ENCODE measurements at regions of chr6 and their contacts with region 1.

Region 1: GRCh38 chr6:158072083-158072721 is 90.5 kb downstream of the SYNJ2 start:
- DNase-seq: peak; percentile 61
- ATAC-seq: peak; percentile 8; the same call in 1 of the 2 replicates
- H3K4me3 ChIP-seq: no peak overlapping the region
- H3K27ac ChIP-seq: peak overlapping the region; percentile 32; the same call in 1 of the 2 replicates
- H3K4me1 ChIP-seq: peaks cover 40% of the 10 kb centered on the region
- H3K27me3 ChIP-seq: no peaks in the 10 kb centered on the region
- CTCF ChIP-seq: peak; percentile 83

Region 2: GRCh38 chr6:157981395-157982296 is 90.6 kb before region 1 on chr6 and contains the start of gene SYNJ2:
- CTCF ChIA-PET with region 1: interaction called, 3 read pairs
- POLR2A ChIA-PET with region 1: no interaction called
- intact Hi-C with region 1: loop called (anchors 1 kb)
- DNase-seq: peak; percentile 72
- ATAC-seq: peak; percentile 72
- H3K4me3 ChIP-seq: peak within 1 kb of the TSS; percentile 94
- H3K27ac ChIP-seq: peak within 1 kb of the TSS; percentile 19
- H3K4me1 ChIP-seq: peaks cover 33% of the 10 kb centered on the region
- H3K27me3 ChIP-seq: no peaks in the 10 kb centered on the region
- CTCF ChIP-seq: peak; percentile 51
- total RNA-seq, gene SYNJ2: 21.5 and 24.9 TPM in 2 replicates

Region 3: DNA sequence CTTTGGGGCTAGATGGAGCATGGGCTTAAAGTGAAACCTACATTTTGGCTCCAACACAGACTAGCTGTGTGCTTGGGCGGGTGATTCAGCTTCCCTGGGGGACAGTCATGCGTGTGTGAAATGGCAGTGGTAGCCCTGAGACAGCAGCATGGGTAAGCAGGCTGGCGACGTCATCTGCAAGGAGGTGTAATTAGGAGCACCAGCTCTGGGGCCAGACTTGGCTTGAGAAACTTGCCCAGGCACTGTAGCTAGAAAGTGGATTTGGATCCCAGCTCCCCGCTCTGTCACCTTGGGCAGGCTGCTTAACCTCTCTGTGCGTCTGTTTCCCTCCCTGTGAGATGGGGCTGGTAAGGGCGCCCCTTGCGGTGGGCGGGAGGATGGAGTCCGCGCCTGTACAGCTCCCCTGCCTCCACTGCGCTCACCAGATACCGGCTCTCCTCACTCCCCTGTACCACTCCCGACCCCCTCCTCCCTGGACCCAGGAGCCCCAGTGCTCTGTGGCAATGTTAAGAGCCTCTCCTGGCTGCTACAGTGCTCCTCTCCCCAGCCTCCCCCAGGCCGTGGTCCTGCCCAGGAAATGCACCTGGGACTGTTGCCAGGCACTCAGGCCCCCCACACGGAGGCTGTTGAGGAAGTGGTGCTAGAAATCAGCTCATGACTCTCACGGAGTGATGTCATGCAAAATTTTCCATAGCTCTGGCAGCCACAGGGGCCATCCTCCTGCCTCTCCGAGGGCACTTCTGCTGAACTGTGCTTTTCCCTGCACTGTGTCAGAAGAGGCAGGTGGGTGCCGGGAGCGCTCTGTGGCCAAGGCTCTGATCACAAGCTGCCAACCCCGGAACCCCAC is 45.9 kb before region 1 on chr6:
- CTCF ChIA-PET with region 1: no interaction called
- POLR2A ChIA-PET with region 1: no interaction called
- intact Hi-C with region 1: loop called (anchors 5 kb)
- DNase-seq: peak; percentile 74
- ATAC-seq: peak; percentile 81
- H3K4me3 ChIP-seq: no peak overlapping the region
- H3K27ac ChIP-seq: peak overlapping the region; percentile 97
- H3K4me1 ChIP-seq: peaks cover 29% of the 10 kb centered on the region
- H3K27me3 ChIP-seq: no peaks in the 10 kb centered on the region
- CTCF ChIP-seq: no peak

Region 4: GRCh38 chr6:158057213-158057987 is 14.8 kb before region 1 on chr6:
- CTCF ChIA-PET with region 1: interaction called, 4 read pairs
- POLR2A ChIA-PET with region 1: interaction called, 3 read pairs
- intact Hi-C with region 1: loop called (anchors 1 kb)
- DNase-seq: peak; percentile 93
- ATAC-seq: peak; percentile 80
- H3K4me3 ChIP-seq: peak overlapping the region; percentile 36; the same call in 1 of the 2 replicates
- H3K27ac ChIP-seq: peak overlapping the region; percentile 96
- H3K4me1 ChIP-seq: peaks cover 50% of the 10 kb centered on the region
- H3K27me3 ChIP-seq: no peaks in the 10 kb centered on the region
- CTCF ChIP-seq: no peak

Region 5: GRCh38 chr6:158103228-158103627 is 31.0 kb after region 1 on chr6:
- CTCF ChIA-PET with region 1: no interaction called
- POLR2A ChIA-PET with region 1: no interaction called
- intact Hi-C with region 1: no loop called
- DNase-seq: no peak
- ATAC-seq: no peak
- H3K4me3 ChIP-seq: no peak overlapping the region
- H3K27ac ChIP-seq: no peak overlapping the region
- H3K4me1 ChIP-seq: no peaks in the 10 kb centered on the region
- H3K27me3 ChIP-seq: no peaks in the 10 kb centered on the region
- CTCF ChIP-seq: no peak

Region 6: DNA sequence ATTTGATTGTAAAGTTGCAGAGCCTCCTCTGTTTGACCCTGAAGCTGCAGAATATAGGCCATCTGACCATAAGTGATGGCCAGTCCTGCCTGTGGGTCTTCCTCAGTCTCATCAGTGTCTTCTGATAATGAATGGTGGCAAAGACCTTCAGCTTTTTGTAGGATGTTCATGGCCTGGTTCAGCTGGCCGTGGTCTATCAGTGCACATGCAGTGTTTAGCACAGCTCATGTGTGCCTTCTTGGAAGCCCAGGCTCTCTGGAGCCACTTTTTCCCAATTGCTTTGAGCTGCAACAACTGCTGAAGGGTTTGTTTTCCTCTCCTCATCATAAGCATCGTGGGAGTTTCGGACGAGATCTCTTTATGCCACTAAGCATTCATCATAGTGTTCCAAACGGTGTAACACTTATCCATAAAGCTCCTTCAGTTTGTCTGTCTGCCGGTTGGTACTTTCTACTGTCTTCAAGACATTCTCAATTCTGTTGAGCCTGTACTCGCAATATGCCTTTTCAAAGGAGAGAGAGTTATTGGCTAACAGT is 169.9 kb after region 1 on chr6:
- CTCF ChIA-PET with region 1: no interaction called
- POLR2A ChIA-PET with region 1: no interaction called
- intact Hi-C with region 1: no loop called
- DNase-seq: no peak
- ATAC-seq: peak; percentile 12; the same call in 1 of the 2 replicates
- H3K4me3 ChIP-seq: no peak overlapping the region; the same call in 1 of the 2 replicates
- H3K27ac ChIP-seq: peak overlapping the region; percentile 9; the same call in 1 of the 2 replicates
- H3K4me1 ChIP-seq: peaks cover 26% of the 10 kb centered on the region
- H3K27me3 ChIP-seq: no peaks in the 10 kb centered on the region
- CTCF ChIP-seq: no peak